ENCODE measurements at regions of chr5 and their contacts with region 1.

Region 1: GRCh38 chr5:68379275-68380036 is 163.9 kb downstream of the PIK3R1 start:
- DNase-seq: no peak
- H3K4me3 Mint-ChIP-seq: no peak overlapping the region
- H3K27ac Mint-ChIP-seq: peak overlapping the region; percentile 70
- H3K4me1 Mint-ChIP-seq: peaks cover 66% of the 10 kb centered on the region
- H3K27me3 Mint-ChIP-seq: peaks cover 6% of the 10 kb centered on the region

Region 2: DNA sequence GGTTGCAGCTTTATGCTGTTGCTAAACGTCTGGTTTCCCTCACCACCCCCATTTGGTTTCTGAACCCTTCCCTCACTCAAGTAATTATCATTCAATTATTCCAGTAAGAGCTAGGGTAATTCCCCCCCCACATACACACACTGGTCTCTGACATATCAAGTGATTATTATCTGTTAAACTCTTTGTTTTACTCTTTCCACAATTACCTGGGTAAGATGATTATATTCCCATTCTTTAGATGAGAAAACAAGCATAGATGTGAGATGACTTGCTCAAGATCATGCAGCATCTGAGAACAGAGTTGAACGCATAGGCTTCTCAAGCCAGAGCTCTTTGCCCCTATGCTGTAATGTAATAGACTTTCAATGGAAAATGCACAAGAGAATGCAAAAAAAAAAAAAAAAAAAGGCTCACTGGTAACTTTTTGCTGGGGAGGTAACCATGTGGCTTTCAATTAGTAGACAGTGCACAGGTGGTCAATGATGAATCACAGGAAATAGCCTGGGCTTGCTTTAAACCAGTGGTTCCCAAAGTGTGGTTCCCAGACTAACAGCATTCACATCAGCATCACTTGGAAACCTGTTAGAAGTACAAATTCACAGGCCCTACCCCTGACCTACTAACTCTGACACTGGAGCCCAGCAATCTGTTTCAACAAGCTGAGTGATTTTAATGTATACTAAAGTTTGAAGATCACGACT is 76.3 kb before region 1 on chr5:
- intact Hi-C with region 1: loop called (anchors 5 kb)
- DNase-seq: no peak
- H3K4me3 Mint-ChIP-seq: peak overlapping the region; percentile 9
- H3K27ac Mint-ChIP-seq: peak overlapping the region; percentile 71
- H3K4me1 Mint-ChIP-seq: peaks cover 32% of the 10 kb centered on the region
- H3K27me3 Mint-ChIP-seq: peaks cover 8% of the 10 kb centered on the region

Region 3: GRCh38 chr5:68406767-68407241 is 27.3 kb after region 1 on chr5:
- intact Hi-C with region 1: loop called (anchors 1 kb)
- DNase-seq: peak; percentile 69
- H3K4me3 Mint-ChIP-seq: peak overlapping the region; percentile 57
- H3K27ac Mint-ChIP-seq: peak overlapping the region; percentile 79
- H3K4me1 Mint-ChIP-seq: peaks cover 26% of the 10 kb centered on the region
- H3K27me3 Mint-ChIP-seq: no peaks in the 10 kb centered on the region

Region 4: GRCh38 chr5:68424799-68425537 is 45.5 kb after region 1 on chr5:
- intact Hi-C with region 1: loop called (anchors 1 kb)
- DNase-seq: peak; percentile 82
- H3K4me3 Mint-ChIP-seq: peak overlapping the region; percentile 27
- H3K27ac Mint-ChIP-seq: peak overlapping the region; percentile 73
- H3K4me1 Mint-ChIP-seq: peaks cover 46% of the 10 kb centered on the region
- H3K27me3 Mint-ChIP-seq: peaks cover 15% of the 10 kb centered on the region

Region 5: DNA sequence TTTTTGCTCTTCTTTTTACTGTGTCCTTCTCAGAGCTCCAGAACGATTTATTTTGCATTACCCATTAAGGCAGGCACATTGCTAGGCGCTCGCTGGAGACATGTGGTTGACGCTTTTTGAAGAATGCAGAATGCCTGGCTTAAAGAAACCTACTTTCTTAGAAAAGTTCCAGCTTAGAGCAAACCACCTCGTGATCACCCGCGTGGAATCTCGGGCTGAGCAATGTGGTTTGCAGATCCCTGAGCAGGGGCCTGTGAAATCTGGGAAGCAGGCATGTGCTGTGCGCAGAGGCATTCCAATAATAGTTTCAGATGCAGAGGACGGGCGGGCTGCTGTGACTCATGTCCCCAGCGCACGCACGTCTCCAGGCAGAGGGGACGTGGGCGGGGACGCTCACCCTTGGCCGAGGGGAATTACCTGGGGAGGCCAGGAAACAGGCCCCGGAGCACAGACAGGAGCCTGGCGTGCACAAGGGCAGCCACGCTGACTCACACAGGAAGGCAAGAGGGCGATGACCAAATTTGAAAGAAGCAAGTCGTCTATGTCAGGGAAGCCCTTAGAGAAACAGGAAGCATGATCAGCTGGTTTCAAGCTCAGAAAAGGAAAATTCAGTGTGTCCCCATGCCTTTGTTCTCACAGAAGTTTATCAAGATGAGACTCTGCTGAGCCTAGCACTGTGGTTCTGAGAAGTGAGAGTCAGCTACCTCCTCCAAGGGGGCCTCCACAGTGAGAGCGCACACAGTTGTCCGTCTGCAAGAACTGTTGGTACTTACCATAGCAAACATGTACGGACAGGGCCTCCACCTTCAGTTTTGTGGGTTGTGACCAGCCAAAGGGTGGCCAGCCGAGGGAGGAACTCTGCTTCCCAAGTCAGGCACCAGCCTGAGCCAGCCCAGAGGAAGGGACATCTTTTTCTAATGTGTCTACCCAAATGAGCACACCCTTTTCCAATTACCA is 54.7 kb after region 1 on chr5:
- intact Hi-C with region 1: loop called (anchors 1 kb)
- DNase-seq: peak; percentile 96
- H3K4me3 Mint-ChIP-seq: peak overlapping the region; percentile 66
- H3K27ac Mint-ChIP-seq: peak overlapping the region; percentile 84
- H3K4me1 Mint-ChIP-seq: peaks cover 54% of the 10 kb centered on the region
- H3K27me3 Mint-ChIP-seq: peaks cover 37% of the 10 kb centered on the region

Measured in activated CD4-positive, alpha-beta T cell treated with anti-CD3 and anti-CD28 coated beads, Interleukin-2, amount 10 ng/mL, durations not matched to agents 24 days and 14 days (primary cell).